ENCODE measurements at regions of chr9 and their contacts with region 1.

Region 1: GRCh38 chr9:121735065-121735789 is 83.8 kb downstream of the DAB2IP start:
- DNase-seq: peak; percentile 73
- H3K4me3 Mint-ChIP-seq: peak overlapping the region; percentile 55
- H3K27ac Mint-ChIP-seq: no peak overlapping the region
- H3K4me1 Mint-ChIP-seq: peaks cover 37% of the 10 kb centered on the region
- H3K27me3 Mint-ChIP-seq: no peaks in the 10 kb centered on the region
- CTCF ChIP-seq: peak; percentile 31

Region 2: DNA sequence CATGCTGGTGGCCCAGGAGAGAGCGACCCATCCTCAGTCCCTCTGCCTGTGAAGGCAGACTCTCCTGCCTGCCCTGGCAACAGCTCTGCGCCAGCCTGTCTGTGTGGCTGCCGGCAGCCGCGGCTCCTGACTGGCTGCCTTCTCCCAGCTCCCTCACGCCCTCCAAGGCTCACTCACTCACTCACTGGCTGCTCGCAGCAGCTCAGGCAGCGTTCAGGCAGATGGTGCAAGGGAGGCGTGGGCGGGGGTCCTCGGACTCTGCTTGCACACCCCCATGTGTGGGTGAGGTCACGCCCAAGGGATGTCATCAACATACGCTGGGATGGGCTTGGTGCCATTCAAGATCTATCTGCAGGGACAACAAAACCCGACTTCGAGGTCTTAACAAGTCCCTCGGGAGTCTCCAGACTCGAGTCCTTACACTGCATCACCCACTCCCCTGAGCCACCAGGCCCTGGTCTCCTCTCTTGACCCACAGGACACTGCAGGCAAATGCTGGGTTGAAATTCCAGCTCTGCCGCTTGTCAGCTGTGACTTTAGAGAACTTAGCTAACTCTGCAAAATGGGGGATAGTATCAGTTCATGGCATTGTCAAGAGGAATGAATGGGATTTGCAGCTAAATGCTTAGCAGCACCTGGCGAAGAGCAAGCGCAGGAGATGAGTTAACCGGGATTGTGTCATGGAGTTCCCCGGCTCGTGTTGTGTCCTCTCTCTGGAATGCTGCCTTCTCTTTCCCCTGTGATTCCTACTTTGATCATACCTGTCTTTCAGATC is 17.0 kb before region 1 on chr9:
- CTCF ChIA-PET with region 1: interaction called, 15 read pairs
- POLR2A ChIA-PET with region 1: no interaction called
- intact Hi-C with region 1: no loop called
- DNase-seq: no peak
- H3K4me3 Mint-ChIP-seq: no peak overlapping the region
- H3K27ac Mint-ChIP-seq: peak overlapping the region; percentile 63
- H3K4me1 Mint-ChIP-seq: peaks cover 35% of the 10 kb centered on the region
- H3K27me3 Mint-ChIP-seq: no peaks in the 10 kb centered on the region
- CTCF ChIP-seq: no peak

Region 3: DNA sequence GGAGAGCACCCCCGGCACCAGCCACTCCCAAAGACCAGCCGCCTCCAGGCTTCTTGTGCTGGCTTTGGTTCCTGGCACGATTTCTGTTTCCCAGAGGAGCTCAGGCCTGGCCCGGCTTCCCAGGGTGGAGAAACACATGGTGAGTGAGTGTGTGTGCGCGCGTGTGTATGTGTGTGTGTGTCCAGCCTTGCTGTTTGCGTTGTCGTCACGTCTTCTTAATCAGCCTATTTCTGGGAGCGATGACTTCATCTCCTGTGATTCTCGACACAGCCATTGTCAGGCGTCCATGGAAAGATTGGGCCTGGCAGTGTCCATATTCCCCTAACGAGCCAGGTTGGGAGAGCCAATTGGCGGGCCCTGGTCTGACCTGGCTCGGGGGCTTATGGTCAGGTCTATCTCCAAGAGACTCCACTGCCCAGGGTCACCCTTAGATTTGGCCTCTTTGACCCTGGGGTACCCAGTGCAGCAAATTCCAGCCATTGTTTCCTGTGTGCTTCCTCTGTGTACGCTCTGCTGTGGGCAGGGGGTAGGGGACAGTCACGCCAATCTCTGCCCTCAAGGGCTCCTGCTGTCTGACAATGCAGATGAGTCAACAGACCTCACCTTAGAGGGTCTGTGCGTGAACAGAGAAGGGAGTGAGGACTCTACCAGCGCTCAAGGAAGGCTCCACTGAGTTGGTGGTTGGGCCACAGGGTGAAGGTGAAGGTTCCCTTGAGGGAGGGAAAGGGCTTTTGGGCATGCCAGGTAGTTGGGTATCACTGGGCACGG is 10.0 kb before region 1 on chr9:
- CTCF ChIA-PET with region 1: interaction called, 15 read pairs
- POLR2A ChIA-PET with region 1: interaction called, 7 read pairs
- intact Hi-C with region 1: no loop called
- DNase-seq: peak; percentile 94
- H3K4me3 Mint-ChIP-seq: no peak overlapping the region
- H3K27ac Mint-ChIP-seq: peak overlapping the region; percentile 86
- H3K4me1 Mint-ChIP-seq: peaks cover 37% of the 10 kb centered on the region
- H3K27me3 Mint-ChIP-seq: no peaks in the 10 kb centered on the region
- CTCF ChIP-seq: no peak